PC-9 (cell line): ENCODE measurements at regions of chr18 and their contacts with region 1.

Region 1: DNA sequence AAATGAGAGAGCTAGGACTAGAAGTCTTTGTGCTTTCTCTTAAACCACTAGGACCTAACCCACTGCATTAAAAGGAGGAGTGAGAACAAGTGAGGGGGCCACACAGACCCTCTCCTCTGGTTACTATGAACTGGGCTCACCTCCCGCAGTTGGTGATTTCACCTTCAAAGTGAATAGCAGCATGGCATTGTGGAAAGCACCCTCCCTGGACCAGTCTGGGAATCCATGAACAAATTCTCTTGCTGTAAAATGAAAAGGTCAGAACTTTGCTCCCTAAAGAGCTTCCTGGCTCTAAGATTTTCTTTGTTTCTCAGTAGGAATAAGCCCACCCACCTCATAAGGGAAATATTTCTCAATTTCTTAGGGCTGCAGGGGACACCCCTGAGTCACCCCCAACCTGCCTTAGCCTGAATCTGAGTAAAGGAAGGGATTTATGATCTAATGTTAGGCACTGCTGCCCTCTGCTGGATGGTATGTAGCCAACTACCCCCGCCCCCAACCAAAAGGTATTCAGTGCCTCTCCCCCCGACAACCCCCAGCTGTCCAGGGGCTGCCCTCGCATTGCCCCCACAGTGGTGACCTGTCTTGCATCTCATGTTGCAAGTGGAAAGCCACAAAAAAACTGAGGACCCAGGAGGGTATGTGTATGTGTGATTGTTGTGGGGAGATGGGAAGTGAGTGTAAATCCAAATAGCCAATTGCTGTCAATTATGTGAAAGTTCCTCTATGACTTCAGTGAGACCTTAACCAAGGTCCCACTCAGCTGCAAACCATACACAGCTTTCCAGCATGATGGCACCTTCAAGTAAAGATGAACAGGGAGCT is 230.9 kb upstream of the SLC14A2 start:
- DNase-seq: peak in 1 of 2 experiments; percentile 29
- H3K4me3 ChIP-seq: no peak overlapping the region
- H3K27ac ChIP-seq: no peak overlapping the region
- H3K4me1 ChIP-seq: peaks cover 5% of the 10 kb centered on the region; the same call in 1 of the 2 replicates
- H3K27me3 ChIP-seq: no peaks in the 10 kb centered on the region
- CTCF ChIP-seq: peak; percentile 89

Region 2: DNA sequence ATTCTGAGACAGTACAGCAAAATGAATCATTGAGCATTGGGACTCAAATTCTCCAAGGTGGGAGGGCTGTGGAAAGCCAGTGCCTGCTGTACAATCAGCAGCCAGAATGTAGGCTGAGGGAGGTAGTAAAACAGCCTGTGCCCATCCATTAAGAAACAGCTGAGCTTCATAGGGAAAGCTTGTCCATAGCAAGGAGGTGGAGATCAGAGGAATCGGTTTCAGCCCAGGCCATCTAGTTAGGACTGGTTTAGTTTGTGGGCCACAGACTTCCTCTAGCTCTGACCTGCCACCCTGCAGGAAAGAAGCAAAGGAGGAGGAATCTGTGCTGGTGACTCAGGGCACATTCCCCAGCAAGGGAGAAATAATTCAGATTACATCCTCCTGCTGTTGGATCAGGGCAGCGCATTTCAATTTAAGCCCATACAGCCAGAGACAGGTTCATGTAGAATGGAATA is 370.3 kb before region 1 on chr18:
- CTCF ChIA-PET with region 1: no interaction called
- POLR2A ChIA-PET with region 1: no interaction called
- intact Hi-C with region 1: loop called (anchors 5 kb)
- DNase-seq: peak; percentile 41 to 65
- H3K4me3 ChIP-seq: no peak overlapping the region
- H3K27ac ChIP-seq: no peak overlapping the region
- H3K4me1 ChIP-seq: no peaks in the 10 kb centered on the region
- H3K27me3 ChIP-seq: no peaks in the 10 kb centered on the region
- CTCF ChIP-seq: peak; percentile 62

Region 3: GRCh38 chr18:45275367-45276113 is 108.8 kb before region 1 on chr18:
- CTCF ChIA-PET with region 1: no interaction called
- POLR2A ChIA-PET with region 1: no interaction called
- intact Hi-C with region 1: loop called (anchors 5 kb)
- DNase-seq: no peak
- H3K4me3 ChIP-seq: no peak overlapping the region
- H3K27ac ChIP-seq: no peak overlapping the region
- H3K4me1 ChIP-seq: no peaks in the 10 kb centered on the region
- H3K27me3 ChIP-seq: no peaks in the 10 kb centered on the region
- CTCF ChIP-seq: peak; percentile 97

Region 4: GRCh38 chr18:45335282-45336043 is 48.9 kb before region 1 on chr18:
- CTCF ChIA-PET with region 1: no interaction called
- POLR2A ChIA-PET with region 1: no interaction called
- intact Hi-C with region 1: no loop called
- DNase-seq: peak; percentile 10 to 77
- H3K4me3 ChIP-seq: no peak overlapping the region
- H3K27ac ChIP-seq: peak overlapping the region; percentile 44
- H3K4me1 ChIP-seq: peaks cover 32% of the 10 kb centered on the region
- H3K27me3 ChIP-seq: no peaks in the 10 kb centered on the region
- CTCF ChIP-seq: no peak